ENCODE measurements at regions of chr10 and their contacts with region 1.

Region 1: DNA sequence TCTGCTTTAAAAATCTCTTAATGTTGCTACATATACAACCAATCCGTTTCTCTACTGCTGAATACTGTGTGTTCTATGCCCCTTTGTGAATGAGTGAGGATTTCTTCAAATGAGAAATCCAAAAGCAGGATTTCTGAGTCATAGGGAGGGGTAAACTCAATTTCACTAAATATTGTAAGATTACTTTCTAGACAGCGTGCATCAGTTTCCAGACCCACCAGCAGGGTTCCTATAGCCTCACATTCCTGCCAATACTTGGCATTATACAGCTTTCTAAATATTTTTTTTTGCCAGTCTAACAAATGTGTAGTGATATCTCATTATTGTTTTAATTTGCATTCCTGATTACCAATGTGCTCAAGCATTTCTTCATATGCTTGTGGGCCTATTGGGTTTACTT is 35.5 kb downstream of the GPR158 start:
- DNase-seq: no peak
- ATAC-seq: no peak

Region 2: DNA sequence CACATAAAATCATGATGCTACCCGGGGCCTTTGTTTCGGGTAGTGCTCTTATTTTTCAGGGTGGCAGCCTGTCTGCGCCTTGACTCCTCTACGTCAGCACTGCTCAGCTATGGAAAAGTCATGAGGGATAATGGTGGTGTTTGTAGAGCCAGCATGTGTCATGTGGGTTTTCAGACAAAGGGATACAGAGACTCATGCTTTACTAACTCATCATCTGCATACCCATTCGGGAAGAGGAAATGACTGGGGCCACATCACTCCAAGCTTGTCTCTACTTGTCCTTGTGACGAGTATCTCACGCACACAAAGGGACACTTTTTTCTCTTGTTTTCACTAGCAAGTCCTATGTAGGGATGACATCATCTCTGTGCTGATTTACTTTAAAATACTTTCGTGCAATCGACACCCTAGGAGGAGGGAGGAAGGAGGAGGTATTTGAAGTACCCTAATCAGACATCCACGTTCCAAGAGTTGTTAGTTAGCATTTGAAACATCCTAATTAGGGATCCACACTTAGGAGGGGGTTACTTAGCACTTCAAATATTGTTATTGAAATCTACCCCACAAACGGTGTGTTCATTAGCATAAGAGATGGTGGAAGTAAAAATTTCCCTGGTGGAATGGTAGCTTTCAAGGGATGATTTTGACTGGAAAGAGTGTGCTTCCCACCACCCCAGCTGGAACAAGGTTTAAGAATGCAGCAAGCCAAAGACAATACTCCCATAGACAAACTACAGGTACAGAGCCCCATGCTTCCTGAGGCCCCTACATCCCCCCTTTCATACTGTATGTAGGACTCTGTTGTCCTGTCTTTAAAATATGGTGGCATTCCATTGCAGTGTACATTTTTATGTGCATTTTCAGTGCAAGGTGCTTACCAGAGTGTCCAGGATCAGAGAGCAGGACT is 141.9 kb before region 1 on chr10:
- intact Hi-C with region 1: no loop called
- DNase-seq: no peak
- ATAC-seq: no peak

Region 3: GRCh38 chr10:25113191-25114035 is 96.9 kb before region 1 on chr10:
- intact Hi-C with region 1: loop called in 1 of 2 experiments (anchors 10 kb)
- DNase-seq: peak; percentile 72 to 82
- ATAC-seq: peak; percentile 92